ENCODE measurements at regions of chr3 and their contacts with region 1.

Region 1: GRCh38 chr3:184561061-184561912 is at the start of gene EPHB3:
- DNase-seq: peak; percentile 96
- H3K4me3 Mint-ChIP-seq: peak within 1 kb of the TSS; percentile 49
- H3K27ac Mint-ChIP-seq: peak within 1 kb of the TSS; percentile 0
- H3K4me1 Mint-ChIP-seq: peaks cover 31% of the 10 kb centered on the region
- H3K27me3 Mint-ChIP-seq: peaks cover 15% of the 10 kb centered on the region
- total RNA-seq, gene EPHB3: 0.07 TPM in 1 of 2 experiments, not detected in the other

Region 2: GRCh38 chr3:184583578-184584425 is 22.5 kb after region 1 on chr3:
- CTCF ChIA-PET with region 1: interaction called, 19 read pairs
- POLR2A ChIA-PET with region 1: no interaction called
- intact Hi-C with region 1: no loop called
- DNase-seq: no peak
- H3K4me3 Mint-ChIP-seq: no peak overlapping the region
- H3K27ac Mint-ChIP-seq: no peak overlapping the region
- H3K4me1 Mint-ChIP-seq: peaks cover 4% of the 10 kb centered on the region
- H3K27me3 Mint-ChIP-seq: peaks cover 14% of the 10 kb centered on the region

Region 3: GRCh38 chr3:184727357-184728009 is 166.2 kb after region 1 on chr3:
- CTCF ChIA-PET with region 1: interaction called, 7 read pairs
- POLR2A ChIA-PET with region 1: no interaction called
- intact Hi-C with region 1: loop called (anchors 1 kb)
- DNase-seq: peak; percentile 62
- H3K4me3 Mint-ChIP-seq: no peak overlapping the region
- H3K27ac Mint-ChIP-seq: no peak overlapping the region
- H3K4me1 Mint-ChIP-seq: no peaks in the 10 kb centered on the region
- H3K27me3 Mint-ChIP-seq: peaks cover 1% of the 10 kb centered on the region

Region 4: GRCh38 chr3:184748219-184749135 is 187.2 kb after region 1 on chr3:
- CTCF ChIA-PET with region 1: interaction called, 20 read pairs
- POLR2A ChIA-PET with region 1: no interaction called
- intact Hi-C with region 1: no loop called
- DNase-seq: peak; percentile 28
- H3K4me3 Mint-ChIP-seq: no peak overlapping the region
- H3K27ac Mint-ChIP-seq: peak overlapping the region; percentile 38
- H3K4me1 Mint-ChIP-seq: peaks cover 9% of the 10 kb centered on the region
- H3K27me3 Mint-ChIP-seq: peaks cover 12% of the 10 kb centered on the region

Region 5: GRCh38 chr3:184783071-184783718 is 221.9 kb after region 1 on chr3:
- CTCF ChIA-PET with region 1: interaction called, 21 read pairs
- POLR2A ChIA-PET with region 1: no interaction called
- intact Hi-C with region 1: no loop called
- DNase-seq: no peak
- H3K4me3 Mint-ChIP-seq: no peak overlapping the region
- H3K27ac Mint-ChIP-seq: no peak overlapping the region
- H3K4me1 Mint-ChIP-seq: peaks cover 21% of the 10 kb centered on the region
- H3K27me3 Mint-ChIP-seq: peaks cover 4% of the 10 kb centered on the region

Region 6: DNA sequence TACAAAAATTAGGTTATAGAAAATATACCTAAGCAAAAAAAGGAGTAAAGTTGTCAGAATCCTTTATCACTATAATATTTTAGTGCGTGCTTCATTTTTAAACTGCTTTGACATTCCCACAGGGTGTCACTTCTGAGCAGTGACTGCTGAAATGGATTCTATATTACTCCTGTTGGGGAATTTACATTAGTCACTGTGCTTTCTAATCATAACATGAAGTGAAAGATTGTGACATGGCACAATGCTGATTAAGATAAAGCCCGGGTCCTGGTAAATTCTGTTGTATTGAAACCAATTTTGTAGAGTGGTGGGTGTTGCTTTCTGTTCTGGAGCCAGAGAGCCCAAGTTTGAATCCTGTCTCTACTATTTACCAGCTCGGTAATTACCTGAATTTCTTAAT is 729.0 kb after region 1 on chr3:
- CTCF ChIA-PET with region 1: no interaction called
- POLR2A ChIA-PET with region 1: no interaction called
- intact Hi-C with region 1: no loop called
- DNase-seq: peak; percentile 16
- H3K4me3 Mint-ChIP-seq: no peak overlapping the region
- H3K27ac Mint-ChIP-seq: no peak overlapping the region
- H3K4me1 Mint-ChIP-seq: peaks cover 11% of the 10 kb centered on the region
- H3K27me3 Mint-ChIP-seq: no peaks in the 10 kb centered on the region

Measured in activated CD4-positive, alpha-beta memory T cell treated with anti-CD3 and anti-CD28 coated beads for 36 hours (primary cell).